Activated CD4-positive, alpha-beta memory T cell treated with anti-CD3 and anti-CD28 coated beads for 36 hours (primary cell): ENCODE measurements at regions of chr10 and their contacts with region 1.

Region 1: GRCh38 chr10:112375721-112376395 is 1.9 kb downstream of the ACSL5 start:
- DNase-seq: peak; percentile 58
- H3K4me3 Mint-ChIP-seq: peak overlapping the region; percentile 94
- H3K27ac Mint-ChIP-seq: peak overlapping the region; percentile 95
- H3K4me1 Mint-ChIP-seq: peaks cover 56% of the 10 kb centered on the region
- H3K27me3 Mint-ChIP-seq: no peaks in the 10 kb centered on the region

Region 2: DNA sequence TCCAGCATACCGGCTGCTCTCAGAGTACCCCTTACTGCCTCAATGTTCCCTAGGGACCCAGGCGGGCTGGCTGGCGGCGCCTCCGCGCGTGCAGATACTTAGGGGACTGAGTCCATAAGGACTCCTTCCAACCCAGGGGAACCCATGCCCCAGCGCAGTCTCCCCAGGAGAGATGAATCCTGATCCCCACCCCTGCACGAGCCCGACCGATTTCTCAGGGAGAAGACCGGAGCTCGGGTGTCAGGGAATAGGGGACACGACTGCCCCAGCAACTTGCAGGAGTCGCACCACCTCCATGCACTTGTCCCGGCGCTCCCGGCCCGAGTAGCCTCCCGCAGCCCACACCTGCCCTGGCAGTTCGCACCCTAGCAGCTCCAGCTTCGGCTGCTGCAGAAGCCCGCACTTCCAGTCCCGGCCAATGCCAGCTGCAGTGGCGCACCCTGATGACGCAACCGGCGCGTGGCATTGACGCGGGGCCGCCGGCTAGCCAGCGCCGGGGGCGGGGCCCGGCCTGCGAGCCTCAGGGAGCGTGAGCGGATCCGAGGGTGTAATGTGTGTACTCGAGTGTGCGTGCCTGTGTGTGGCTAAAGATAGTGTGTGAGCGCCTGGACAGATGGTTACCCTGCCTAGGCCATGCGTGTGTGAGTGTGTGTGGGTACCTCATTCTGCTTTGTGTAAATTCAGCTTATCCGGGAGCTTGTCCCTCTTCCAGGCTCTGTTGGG is 192.4 kb before region 1 on chr10 and contains the start of gene GPAM:
- CTCF ChIA-PET with region 1: no interaction called
- POLR2A ChIA-PET with region 1: no interaction called
- intact Hi-C with region 1: loop called (anchors 5 kb)
- DNase-seq: peak; percentile 98
- H3K4me3 Mint-ChIP-seq: peak within 1 kb of the TSS; percentile 88
- H3K27ac Mint-ChIP-seq: peak within 1 kb of the TSS; percentile 81
- H3K4me1 Mint-ChIP-seq: peaks cover 24% of the 10 kb centered on the region
- H3K27me3 Mint-ChIP-seq: no peaks in the 10 kb centered on the region
- total RNA-seq, gene GPAM: 3.3 to 4.7 TPM

Region 3: GRCh38 chr10:112304267-112304859 is 71.5 kb before region 1 on chr10:
- CTCF ChIA-PET with region 1: no interaction called
- POLR2A ChIA-PET with region 1: no interaction called
- intact Hi-C with region 1: no loop called
- DNase-seq: no peak
- H3K4me3 Mint-ChIP-seq: no peak overlapping the region
- H3K27ac Mint-ChIP-seq: no peak overlapping the region
- H3K4me1 Mint-ChIP-seq: no peaks in the 10 kb centered on the region
- H3K27me3 Mint-ChIP-seq: peaks cover 13% of the 10 kb centered on the region

Region 4: GRCh38 chr10:112389147-112389822 is 13.4 kb after region 1 on chr10:
- CTCF ChIA-PET with region 1: interaction called, 8 read pairs
- POLR2A ChIA-PET with region 1: interaction called, 21 read pairs
- intact Hi-C with region 1: loop called (anchors 1 kb)
- DNase-seq: peak; percentile 80
- H3K4me3 Mint-ChIP-seq: peak overlapping the region; percentile 1
- H3K27ac Mint-ChIP-seq: peak overlapping the region; percentile 88
- H3K4me1 Mint-ChIP-seq: peaks cover 58% of the 10 kb centered on the region
- H3K27me3 Mint-ChIP-seq: no peaks in the 10 kb centered on the region

Region 5: DNA sequence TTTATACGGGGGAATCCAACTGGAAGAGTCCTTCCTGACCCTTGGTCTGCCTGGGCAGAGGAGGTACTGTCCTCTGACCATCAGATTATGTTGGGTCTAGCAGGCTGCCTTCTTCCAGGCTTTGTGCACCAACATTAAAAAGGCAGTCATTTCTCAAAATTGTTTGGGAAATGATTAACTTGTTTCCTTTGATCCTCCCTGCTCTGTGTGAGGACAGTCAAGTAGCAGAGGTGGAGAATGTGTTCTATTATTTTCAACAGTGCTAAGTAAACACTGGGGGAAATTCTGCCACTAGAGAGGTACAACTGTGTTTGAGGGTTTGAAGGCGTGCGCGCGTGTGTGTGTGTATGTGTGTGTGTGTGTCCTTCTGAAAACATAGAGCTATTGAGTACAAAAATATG is 18.6 kb after region 1 on chr10:
- CTCF ChIA-PET with region 1: interaction called, 3 read pairs
- POLR2A ChIA-PET with region 1: interaction called, 21 read pairs
- intact Hi-C with region 1: loop called (anchors 1 kb)
- DNase-seq: no peak
- H3K4me3 Mint-ChIP-seq: no peak overlapping the region
- H3K27ac Mint-ChIP-seq: no peak overlapping the region
- H3K4me1 Mint-ChIP-seq: peaks cover 15% of the 10 kb centered on the region
- H3K27me3 Mint-ChIP-seq: no peaks in the 10 kb centered on the region

Region 6: DNA sequence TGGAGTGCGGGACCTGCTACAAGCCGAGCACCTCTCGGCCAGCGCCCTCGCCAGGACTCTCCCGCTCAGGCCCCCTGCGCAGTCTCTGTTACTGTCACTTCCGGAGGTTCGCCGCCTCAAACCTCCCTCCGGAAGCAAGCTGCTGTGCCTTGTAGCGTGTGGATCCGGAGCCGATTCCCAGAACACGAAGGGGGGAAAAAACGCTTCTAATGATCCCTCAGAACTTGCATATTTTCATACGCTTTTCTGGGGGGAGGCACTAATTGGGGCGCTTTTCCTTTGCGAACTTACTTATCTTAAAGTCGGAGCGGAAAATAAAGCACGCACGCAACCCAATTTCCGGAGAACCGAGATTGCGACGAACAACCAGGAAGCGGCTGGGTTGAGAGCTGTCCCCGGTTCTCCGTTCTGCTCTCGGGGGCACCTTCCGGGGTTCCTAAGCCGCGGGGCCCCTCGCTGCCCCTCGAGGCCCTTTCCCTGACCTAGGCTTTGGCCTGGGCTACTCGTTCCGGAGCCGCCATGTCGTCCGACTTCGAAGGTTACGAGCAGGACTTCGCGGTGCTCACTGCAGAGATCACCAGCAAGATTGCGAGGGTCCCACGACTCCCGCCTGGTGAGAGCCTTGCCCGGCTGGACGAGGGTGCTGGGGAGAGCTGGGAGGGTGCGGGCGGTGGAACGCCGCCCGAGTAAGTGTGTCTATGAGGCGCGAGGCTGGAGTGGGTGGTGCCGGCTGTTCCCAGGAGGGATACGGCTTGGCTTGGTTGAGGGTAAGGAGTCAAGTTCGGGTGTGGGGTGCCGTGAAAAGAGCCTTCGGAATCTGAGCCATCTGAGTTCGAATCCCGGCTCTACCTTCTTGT is 71.2 kb after region 1 on chr10 and contains the starts of genes VTI1A and ZDHHC6:
- CTCF ChIA-PET with region 1: interaction called, 3 read pairs
- POLR2A ChIA-PET with region 1: interaction called, 5 read pairs
- intact Hi-C with region 1: loop called (anchors 2 kb)
- DNase-seq: peak; percentile 90
- H3K4me3 Mint-ChIP-seq: peak within 1 kb of the TSS; percentile 96
- H3K27ac Mint-ChIP-seq: peak within 1 kb of the TSS; percentile 91
- H3K4me1 Mint-ChIP-seq: peaks cover 51% of the 10 kb centered on the region
- H3K27me3 Mint-ChIP-seq: no peaks in the 10 kb centered on the region
- total RNA-seq, gene VTI1A: 24.3 to 24.5 TPM
- total RNA-seq, gene ZDHHC6: 40.1 to 40.7 TPM

Region 7: DNA sequence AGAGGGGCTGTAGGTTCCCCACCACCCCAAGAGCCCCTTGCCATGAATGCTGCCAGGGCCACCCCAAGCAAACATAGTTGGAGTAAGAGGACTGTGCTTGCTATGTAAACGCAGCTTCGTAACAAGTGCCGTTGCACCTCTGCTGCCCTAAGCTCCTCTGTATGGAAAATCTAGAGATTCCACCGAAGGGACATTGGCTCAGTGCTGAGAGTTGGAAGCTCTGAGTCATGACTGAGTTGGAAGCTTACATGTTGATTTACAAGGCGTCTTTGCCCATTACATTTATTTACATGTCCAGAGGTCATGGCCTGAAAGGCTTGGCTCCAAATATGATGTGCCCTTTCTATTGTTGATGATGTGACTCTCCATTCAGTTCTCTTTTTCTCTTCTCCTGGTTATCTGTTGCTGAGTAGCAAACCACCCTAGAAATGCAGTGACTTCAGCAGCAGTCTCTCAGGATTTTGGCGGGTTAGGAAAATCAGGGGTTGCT is 341.1 kb after region 1 on chr10:
- CTCF ChIA-PET with region 1: no interaction called
- POLR2A ChIA-PET with region 1: no interaction called
- intact Hi-C with region 1: no loop called
- DNase-seq: no peak
- H3K4me3 Mint-ChIP-seq: no peak overlapping the region
- H3K27ac Mint-ChIP-seq: no peak overlapping the region
- H3K4me1 Mint-ChIP-seq: no peaks in the 10 kb centered on the region
- H3K27me3 Mint-ChIP-seq: no peaks in the 10 kb centered on the region